ENCODE measurements at regions of chr4 and their contacts with region 1.

Region 1: GRCh38 chr4:183471946-183472708 is 27.7 kb downstream of the CDKN2AIP start:
- DNase-seq: peak; percentile 60
- ATAC-seq: peak; percentile 73
- H3K4me3 Mint-ChIP-seq: no peak overlapping the region
- H3K27ac Mint-ChIP-seq: no peak overlapping the region
- H3K4me1 Mint-ChIP-seq: peaks cover 2% of the 10 kb centered on the region
- H3K27me3 Mint-ChIP-seq: no peaks in the 10 kb centered on the region
- CTCF ChIP-seq: peak; percentile 67

Region 2: DNA sequence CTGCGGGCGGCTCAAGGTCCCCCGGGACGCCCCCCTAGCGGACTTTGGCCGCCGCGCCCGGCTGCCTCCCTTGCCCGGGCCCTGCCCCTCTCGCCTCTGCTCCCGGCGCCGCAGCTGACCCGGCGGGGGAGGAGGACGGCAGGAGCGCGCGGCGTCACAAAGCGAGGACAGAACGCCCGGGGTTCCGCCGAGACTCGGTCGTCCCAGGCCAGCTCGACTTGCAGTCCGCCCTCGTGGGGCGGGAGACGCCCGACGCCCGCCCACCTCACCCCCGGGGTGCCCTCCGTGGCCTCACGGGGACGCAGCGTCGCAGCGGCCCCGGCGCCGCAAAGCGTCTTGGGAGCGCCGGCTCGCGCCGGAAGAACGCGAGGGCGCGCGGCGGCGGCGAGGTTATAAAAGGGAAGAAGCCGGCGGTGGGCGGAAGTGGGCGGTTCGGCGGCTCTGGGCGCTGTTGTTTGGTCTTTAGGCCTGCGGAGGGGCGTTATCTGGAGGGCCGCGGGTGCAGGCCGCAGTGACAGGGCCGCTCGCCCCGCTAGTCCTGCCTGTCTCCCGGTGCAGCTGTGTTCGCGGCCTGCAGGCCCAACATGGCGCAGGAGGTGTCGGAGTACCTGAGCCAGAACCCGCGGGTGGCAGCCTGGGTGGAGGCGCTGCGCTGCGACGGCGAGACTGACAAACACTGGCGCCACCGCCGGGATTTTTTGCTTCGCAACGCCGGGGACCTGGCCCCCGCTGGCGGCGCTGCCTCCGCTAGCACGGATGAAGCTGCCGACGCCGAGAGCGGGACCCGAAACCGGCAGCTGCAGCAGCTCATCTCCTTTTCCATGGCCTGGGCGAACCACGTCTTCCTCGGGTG is 27.7 kb before region 1 on chr4 and contains the start of gene CDKN2AIP:
- CTCF ChIA-PET with region 1: no interaction called
- POLR2A ChIA-PET with region 1: no interaction called
- intact Hi-C with region 1: loop called (anchors 2 kb)
- DNase-seq: peak; percentile 93
- ATAC-seq: peak; percentile 86
- H3K4me3 Mint-ChIP-seq: peak within 1 kb of the TSS; percentile 95
- H3K27ac Mint-ChIP-seq: peak within 1 kb of the TSS; percentile 95
- H3K4me1 Mint-ChIP-seq: peaks cover 36% of the 10 kb centered on the region
- H3K27me3 Mint-ChIP-seq: no peaks in the 10 kb centered on the region
- CTCF ChIP-seq: no peak
- total RNA-seq, gene CDKN2AIP: 19.9 and 21.8 TPM in 2 replicates

Region 3: GRCh38 chr4:183492791-183493221 is 20.7 kb after region 1 on chr4:
- CTCF ChIA-PET with region 1: no interaction called
- POLR2A ChIA-PET with region 1: no interaction called
- intact Hi-C with region 1: no loop called
- DNase-seq: no peak
- ATAC-seq: no peak
- H3K4me3 Mint-ChIP-seq: no peak overlapping the region
- H3K27ac Mint-ChIP-seq: no peak overlapping the region
- H3K4me1 Mint-ChIP-seq: no peaks in the 10 kb centered on the region
- H3K27me3 Mint-ChIP-seq: no peaks in the 10 kb centered on the region
- CTCF ChIP-seq: no peak

Region 4: GRCh38 chr4:183602557-183603027 is 130.5 kb after region 1 on chr4:
- CTCF ChIA-PET with region 1: interaction called, 4 read pairs
- POLR2A ChIA-PET with region 1: no interaction called
- intact Hi-C with region 1: loop called (anchors 1 kb)
- DNase-seq: no peak
- ATAC-seq: no peak
- H3K4me3 Mint-ChIP-seq: no peak overlapping the region
- H3K27ac Mint-ChIP-seq: no peak overlapping the region
- H3K4me1 Mint-ChIP-seq: no peaks in the 10 kb centered on the region
- H3K27me3 Mint-ChIP-seq: no peaks in the 10 kb centered on the region
- CTCF ChIP-seq: no peak

Region 5: DNA sequence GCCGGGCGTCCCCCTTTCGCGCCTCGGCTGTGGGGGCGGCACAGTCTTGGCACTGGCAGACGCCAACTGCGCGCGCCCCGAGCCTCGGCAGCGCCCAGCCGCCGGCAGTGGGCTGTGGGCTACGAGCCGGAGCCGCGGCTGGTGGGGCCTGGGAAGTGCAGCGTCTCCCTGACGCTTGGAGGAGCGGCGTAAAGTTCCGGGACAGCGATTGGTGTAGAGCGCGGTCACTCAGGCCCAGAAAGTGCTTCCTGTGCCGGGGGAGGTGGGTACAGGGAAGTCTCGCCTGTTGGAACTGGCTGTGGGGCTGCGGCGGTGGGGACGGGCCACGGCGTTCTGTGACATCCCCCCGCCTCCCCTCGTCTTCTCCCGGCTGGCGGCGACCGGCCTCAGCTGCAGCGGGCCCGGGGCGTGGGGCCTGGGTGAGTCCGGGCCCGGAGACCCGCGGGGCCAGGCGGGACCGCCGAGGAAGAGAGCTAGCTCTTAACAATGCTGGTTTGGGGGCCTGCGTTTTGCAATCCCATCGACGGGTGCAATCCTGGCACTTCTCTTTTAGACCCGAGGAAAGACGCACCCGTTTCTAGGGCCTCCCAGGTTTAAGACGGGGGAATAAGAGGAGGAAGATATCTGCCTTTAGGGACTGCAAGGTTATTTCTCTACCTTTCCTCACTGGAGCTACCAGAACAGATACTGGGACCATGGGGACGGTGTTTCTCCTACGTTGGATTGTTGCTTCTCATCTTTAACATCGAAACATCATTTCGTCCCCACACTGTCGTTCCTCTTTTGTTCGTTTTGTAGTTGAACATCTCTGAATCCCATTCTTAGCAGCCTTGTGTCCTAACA is 187.1 kb after region 1 on chr4 and contains the starts of genes RWDD4 and TRAPPC11:
- CTCF ChIA-PET with region 1: no interaction called
- POLR2A ChIA-PET with region 1: no interaction called
- intact Hi-C with region 1: loop called (anchors 1 kb)
- DNase-seq: peak; percentile 87
- ATAC-seq: peak; percentile 98
- H3K4me3 Mint-ChIP-seq: peak within 1 kb of the TSS; percentile 93
- H3K27ac Mint-ChIP-seq: peak within 1 kb of the TSS; percentile 92
- H3K4me1 Mint-ChIP-seq: peaks cover 33% of the 10 kb centered on the region
- H3K27me3 Mint-ChIP-seq: no peaks in the 10 kb centered on the region
- CTCF ChIP-seq: no peak
- total RNA-seq, gene RWDD4: 14.6 and 15.4 TPM in 2 replicates
- total RNA-seq, gene TRAPPC11: 42.9 and 45.2 TPM in 2 replicates

Region 6: GRCh38 chr4:183722731-183723560 is 250.8 kb after region 1 on chr4:
- CTCF ChIA-PET with region 1: no interaction called
- POLR2A ChIA-PET with region 1: no interaction called
- intact Hi-C with region 1: loop called (anchors 1 kb)
- DNase-seq: peak; percentile 34
- ATAC-seq: peak; percentile 64
- H3K4me3 Mint-ChIP-seq: peak overlapping the region; percentile 77
- H3K27ac Mint-ChIP-seq: peak overlapping the region; percentile 30
- H3K4me1 Mint-ChIP-seq: peaks cover 12% of the 10 kb centered on the region
- H3K27me3 Mint-ChIP-seq: peaks cover 6% of the 10 kb centered on the region
- CTCF ChIP-seq: no peak

Region 7: DNA sequence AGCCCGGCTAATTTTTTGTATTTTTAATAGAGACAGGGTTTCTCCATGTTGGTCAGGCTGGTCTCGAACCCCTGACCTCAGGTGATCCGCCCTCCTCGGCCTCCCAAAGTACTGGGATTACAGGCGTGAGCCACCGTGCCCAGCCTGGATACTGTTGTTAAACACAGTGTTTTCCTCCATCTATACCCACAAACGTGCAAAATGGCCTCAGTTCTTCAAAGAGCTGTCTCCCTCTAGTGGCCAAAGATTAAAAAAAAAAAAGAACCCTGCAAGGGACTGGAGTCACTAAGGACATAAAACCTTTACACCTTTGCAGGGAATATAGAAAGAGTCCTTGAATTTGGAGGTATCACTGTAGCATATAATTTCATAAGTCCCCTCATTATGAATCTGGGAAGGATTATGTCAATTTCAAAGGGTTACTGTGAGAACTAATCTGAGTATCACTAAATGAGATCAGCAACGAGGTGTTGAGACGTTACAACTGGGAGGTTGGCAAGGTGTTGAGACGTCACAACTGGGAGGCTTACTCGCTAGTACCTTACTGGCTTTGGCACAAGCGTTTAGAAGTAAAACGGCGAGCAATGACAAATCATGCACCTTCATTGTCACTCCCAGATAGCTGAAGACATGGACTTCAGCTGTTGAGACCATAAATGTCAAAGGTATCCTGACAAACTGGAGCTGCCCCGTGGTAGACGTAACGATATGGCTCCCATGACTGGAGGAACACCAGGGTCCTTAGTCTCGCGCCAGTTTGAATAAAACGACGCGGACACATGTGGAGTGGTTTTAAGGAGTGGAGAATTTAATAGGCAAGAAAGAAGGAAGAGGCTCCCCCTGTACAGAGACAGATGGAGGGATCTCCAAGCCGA is 778.9 kb after region 1 on chr4:
- CTCF ChIA-PET with region 1: no interaction called
- POLR2A ChIA-PET with region 1: no interaction called
- intact Hi-C with region 1: loop called (anchors 1 kb)
- DNase-seq: no peak
- ATAC-seq: peak; percentile 61
- H3K4me3 Mint-ChIP-seq: no peak overlapping the region
- H3K27ac Mint-ChIP-seq: no peak overlapping the region
- H3K4me1 Mint-ChIP-seq: peaks cover 4% of the 10 kb centered on the region
- H3K27me3 Mint-ChIP-seq: peaks cover 5% of the 10 kb centered on the region
- CTCF ChIP-seq: no peak

Region 8: GRCh38 chr4:185096032-185096653 is 1624.0 kb after region 1 on chr4:
- CTCF ChIA-PET with region 1: no interaction called
- POLR2A ChIA-PET with region 1: no interaction called
- intact Hi-C with region 1: loop called (anchors 5 kb)
- DNase-seq: no peak
- ATAC-seq: no peak
- H3K4me3 Mint-ChIP-seq: no peak overlapping the region
- H3K27ac Mint-ChIP-seq: no peak overlapping the region
- H3K4me1 Mint-ChIP-seq: no peaks in the 10 kb centered on the region
- H3K27me3 Mint-ChIP-seq: peaks cover 18% of the 10 kb centered on the region
- CTCF ChIP-seq: no peak